ENCODE measurements at regions of chr6 and their contacts with region 1.

Region 1: DNA sequence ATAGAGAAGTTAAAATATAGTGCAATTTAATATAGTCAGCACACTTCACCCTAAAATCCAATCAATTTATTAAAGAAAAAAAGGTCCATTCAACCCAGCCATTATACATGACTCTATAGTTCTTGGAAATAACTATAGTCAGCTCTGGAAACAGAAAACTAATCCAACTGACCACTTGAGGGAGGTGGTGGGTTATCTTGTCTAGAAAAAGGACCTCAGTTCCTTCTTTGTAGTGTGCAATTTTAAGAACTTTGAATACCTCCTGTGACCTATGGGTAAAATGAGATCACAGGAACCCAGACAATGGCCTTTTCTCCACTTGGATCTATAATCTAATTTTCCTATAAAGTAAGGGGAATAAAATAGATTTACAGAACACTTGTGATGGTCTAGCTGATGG is 163.6 kb upstream of the CENPW start:
- DNase-seq: peak; percentile 51
- H3K4me3 ChIP-seq: no peak overlapping the region
- H3K27ac ChIP-seq: no peak overlapping the region
- H3K4me1 ChIP-seq: no peaks in the 10 kb centered on the region
- H3K27me3 ChIP-seq: no peaks in the 10 kb centered on the region
- CTCF ChIP-seq: peak; percentile 17 to 42
- POLR2A ChIP-seq: no peak

Region 2: DNA sequence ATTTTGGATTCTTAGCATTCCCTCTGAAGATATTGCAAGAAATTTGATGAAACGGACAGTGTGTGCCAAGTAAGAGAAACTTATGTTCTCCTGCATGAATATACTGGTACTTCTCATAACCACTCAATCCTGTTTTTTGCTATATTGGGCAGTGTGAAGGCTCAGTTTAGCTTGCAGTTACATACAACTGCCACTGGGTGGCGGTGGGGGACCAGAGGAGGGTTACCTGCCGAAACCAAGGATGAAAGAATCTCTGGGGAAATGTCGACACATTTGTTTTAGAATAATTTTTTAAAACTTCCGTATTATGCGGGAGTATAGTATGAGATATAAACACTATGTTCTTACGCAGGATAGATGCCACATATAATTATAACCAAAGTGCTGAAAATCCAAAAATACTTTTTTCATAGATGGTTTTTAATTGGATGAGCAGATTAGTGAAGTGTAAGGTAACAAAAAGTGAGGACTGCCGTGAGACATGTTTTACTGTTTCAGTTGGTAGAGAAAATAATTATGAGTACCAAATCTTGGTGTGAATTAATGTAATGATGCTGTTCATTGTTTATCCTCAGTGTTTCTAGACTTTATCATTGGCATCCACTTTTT is 180.2 kb before region 1 on chr6:
- CTCF ChIA-PET with region 1: interaction called, 8 read pairs
- POLR2A ChIA-PET with region 1: no interaction called
- dilution Hi-C with region 1: no loop called
- intact Hi-C with region 1: loop called (anchors 1 kb)
- DNase-seq: peak; percentile 74
- H3K4me3 ChIP-seq: no peak overlapping the region
- H3K27ac ChIP-seq: no peak overlapping the region
- H3K4me1 ChIP-seq: no peaks in the 10 kb centered on the region
- H3K27me3 ChIP-seq: no peaks in the 10 kb centered on the region
- CTCF ChIP-seq: peak; percentile 84 to 97
- POLR2A ChIP-seq: no peak

Region 3: DNA sequence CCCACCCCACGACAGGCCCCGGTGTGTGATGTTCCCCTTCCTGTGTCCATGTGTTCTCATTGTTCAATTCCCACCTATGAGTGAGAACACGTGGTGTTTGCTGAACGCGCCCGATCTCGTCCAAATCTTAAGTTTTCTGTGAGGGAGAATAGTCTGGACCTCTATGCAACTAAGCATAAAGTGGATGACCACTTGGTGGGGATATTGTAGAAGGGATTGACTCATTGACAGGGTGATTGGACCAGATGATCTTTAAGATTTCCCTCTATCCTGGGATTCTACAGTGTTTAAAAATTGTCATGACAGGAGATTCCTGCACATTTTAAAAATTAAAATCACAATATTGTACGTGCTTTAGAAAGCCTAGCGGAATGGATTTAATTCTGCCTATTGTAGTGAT is 48.6 kb before region 1 on chr6:
- CTCF ChIA-PET with region 1: no interaction called
- POLR2A ChIA-PET with region 1: no interaction called
- dilution Hi-C with region 1: no loop called
- intact Hi-C with region 1: no loop called
- DNase-seq: no peak
- H3K4me3 ChIP-seq: no peak overlapping the region
- H3K27ac ChIP-seq: no peak overlapping the region
- H3K4me1 ChIP-seq: no peaks in the 10 kb centered on the region
- H3K27me3 ChIP-seq: no peaks in the 10 kb centered on the region
- CTCF ChIP-seq: no peak
- POLR2A ChIP-seq: no peak

Region 4: GRCh38 chr6:126188271-126188909 is 12.1 kb after region 1 on chr6:
- CTCF ChIA-PET with region 1: interaction called, 11 read pairs
- POLR2A ChIA-PET with region 1: no interaction called
- dilution Hi-C with region 1: no loop called
- intact Hi-C with region 1: no loop called
- DNase-seq: peak; percentile 6
- H3K4me3 ChIP-seq: no peak overlapping the region
- H3K27ac ChIP-seq: no peak overlapping the region
- H3K4me1 ChIP-seq: no peaks in the 10 kb centered on the region
- H3K27me3 ChIP-seq: no peaks in the 10 kb centered on the region
- CTCF ChIP-seq: no peak
- POLR2A ChIP-seq: no peak

Region 5: DNA sequence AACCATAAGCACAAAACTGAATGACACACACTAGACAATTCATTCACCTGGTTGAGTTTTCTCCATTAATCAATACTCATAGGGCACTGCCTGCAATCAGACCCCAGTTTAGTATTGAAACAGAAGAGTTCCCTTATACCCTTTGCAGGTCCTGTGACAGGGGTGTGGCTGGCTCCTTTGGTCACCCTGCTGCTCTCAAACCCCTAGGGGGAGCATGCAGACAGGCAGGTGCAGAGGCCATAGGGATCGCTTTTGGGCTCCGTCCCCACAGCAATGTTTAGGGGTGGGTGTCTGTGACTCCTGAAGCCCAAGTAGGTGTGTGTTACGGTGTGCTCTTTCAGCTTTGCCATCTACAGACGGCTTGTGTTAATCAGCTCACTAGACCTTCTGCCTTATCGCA is 374.0 kb after region 1 on chr6:
- CTCF ChIA-PET with region 1: no interaction called
- POLR2A ChIA-PET with region 1: no interaction called
- dilution Hi-C with region 1: no loop called
- intact Hi-C with region 1: no loop called
- DNase-seq: no peak
- H3K4me3 ChIP-seq: no peak overlapping the region
- H3K27ac ChIP-seq: no peak overlapping the region
- H3K4me1 ChIP-seq: no peaks in the 10 kb centered on the region
- H3K27me3 ChIP-seq: no peaks in the 10 kb centered on the region
- CTCF ChIP-seq: no peak
- POLR2A ChIP-seq: no peak

Region 6: DNA sequence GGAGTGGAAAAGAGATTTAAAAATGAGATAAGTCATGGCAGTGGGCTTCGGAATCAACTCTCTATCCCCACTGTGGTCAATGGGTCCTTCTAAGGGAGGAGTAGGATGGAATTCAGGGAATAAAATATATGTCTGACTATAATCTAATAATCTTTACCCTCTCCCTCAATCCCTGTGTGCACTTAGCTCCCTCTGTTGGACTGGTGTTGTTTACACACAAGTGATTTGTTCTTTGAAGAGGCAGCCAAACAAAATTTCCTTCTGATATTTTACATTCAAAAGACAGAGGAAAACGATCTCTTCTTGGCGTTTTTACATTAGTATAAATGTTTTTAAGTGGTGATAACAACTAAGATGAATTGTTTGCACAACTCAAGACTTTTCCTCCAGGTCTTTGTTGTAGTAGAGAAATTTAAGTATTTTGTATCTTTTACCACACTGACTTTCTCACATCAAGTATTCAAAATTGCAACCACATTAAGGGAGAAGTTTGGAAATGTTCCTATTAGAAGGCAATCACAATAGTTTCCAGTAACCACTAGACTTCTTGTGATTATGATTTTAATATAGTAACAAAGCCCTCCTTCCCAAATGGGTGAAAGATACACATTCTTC is 481.4 kb after region 1 on chr6:
- CTCF ChIA-PET with region 1: interaction called, 56 read pairs
- POLR2A ChIA-PET with region 1: no interaction called
- dilution Hi-C with region 1: no loop called
- intact Hi-C with region 1: loop called (anchors 1 kb)
- DNase-seq: peak; percentile 56
- H3K4me3 ChIP-seq: no peak overlapping the region
- H3K27ac ChIP-seq: no peak overlapping the region
- H3K4me1 ChIP-seq: no peaks in the 10 kb centered on the region
- H3K27me3 ChIP-seq: no peaks in the 10 kb centered on the region
- CTCF ChIP-seq: peak; percentile 36 to 41
- POLR2A ChIP-seq: no peak

Region 7: GRCh38 chr6:127100510-127101140 is 924.3 kb after region 1 on chr6:
- CTCF ChIA-PET with region 1: interaction called, 10 read pairs
- POLR2A ChIA-PET with region 1: no interaction called
- dilution Hi-C with region 1: no loop called
- intact Hi-C with region 1: no loop called
- DNase-seq: peak; percentile 41
- H3K4me3 ChIP-seq: no peak overlapping the region
- H3K27ac ChIP-seq: no peak overlapping the region
- H3K4me1 ChIP-seq: no peaks in the 10 kb centered on the region
- H3K27me3 ChIP-seq: no peaks in the 10 kb centered on the region
- CTCF ChIP-seq: peak in 1 of 2 donors; percentile 32
- POLR2A ChIP-seq: no peak

Measured in endothelial cell of umbilical vein (primary cell).